ENCODE measurements at regions of chr9 and their contacts with region 1.

Region 1: DNA sequence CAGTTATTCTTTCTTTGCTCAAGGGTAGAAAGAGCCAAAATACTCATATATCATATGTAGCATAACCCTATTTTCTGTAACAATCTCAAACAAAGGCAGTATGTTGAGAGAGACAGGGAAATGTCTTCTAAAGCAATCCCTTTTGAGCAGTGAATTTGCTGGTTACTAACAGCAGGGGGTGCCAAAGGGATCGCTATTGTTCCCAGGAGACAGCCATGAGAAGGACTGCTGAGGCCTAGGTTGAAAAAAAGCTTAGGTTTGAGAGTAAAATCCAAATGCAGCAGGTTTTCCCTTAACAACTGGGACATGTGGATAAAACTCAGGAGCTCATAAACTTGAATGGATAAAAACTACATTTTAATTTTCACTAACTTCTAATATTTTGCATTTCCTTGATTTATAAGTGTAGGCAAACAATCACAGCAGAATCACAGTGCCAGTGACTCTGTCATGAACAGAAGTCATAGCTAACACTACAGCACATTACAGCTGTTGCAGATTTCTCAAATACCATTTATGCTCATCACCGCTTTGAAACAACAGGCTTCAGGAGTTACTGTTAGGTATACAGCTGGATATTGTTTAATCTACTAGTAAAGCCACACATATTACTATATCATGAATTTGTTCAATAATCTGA is 148.4 kb downstream of the MAPKAP1 start:
- DNase-seq: peak; percentile 66
- ATAC-seq: peak; percentile 82
- H3K4me3 ChIP-seq: no peak overlapping the region
- H3K27ac ChIP-seq: no peak overlapping the region
- H3K4me1 ChIP-seq: peaks cover 6% of the 10 kb centered on the region; the same call in 1 of the 2 replicates
- H3K27me3 ChIP-seq: no peaks in the 10 kb centered on the region
- CTCF ChIP-seq: peak; percentile 84
- EP300 ChIP-seq: no peak
- POLR2A ChIP-seq: no peak
- RAD21 ChIP-seq: peak; percentile 76

Region 2: GRCh38 chr9:125433461-125434011 is 125.0 kb before region 1 on chr9:
- CTCF ChIA-PET with region 1: no interaction called
- POLR2A ChIA-PET with region 1: no interaction called
- in situ Hi-C with region 1: no loop called
- intact Hi-C with region 1: loop called (anchors 5 kb)
- DNase-seq: no peak
- ATAC-seq: no peak
- H3K4me3 ChIP-seq: no peak overlapping the region
- H3K27ac ChIP-seq: no peak overlapping the region
- H3K4me1 ChIP-seq: peaks cover 18% of the 10 kb centered on the region
- H3K27me3 ChIP-seq: peaks cover 0 to 8% of the 10 kb centered on the region in 2 experiments; a peak in 1 of 5 replicates
- CTCF ChIP-seq: no peak
- EP300 ChIP-seq: no peak
- POLR2A ChIP-seq: no peak
- RAD21 ChIP-seq: no peak

Region 3: DNA sequence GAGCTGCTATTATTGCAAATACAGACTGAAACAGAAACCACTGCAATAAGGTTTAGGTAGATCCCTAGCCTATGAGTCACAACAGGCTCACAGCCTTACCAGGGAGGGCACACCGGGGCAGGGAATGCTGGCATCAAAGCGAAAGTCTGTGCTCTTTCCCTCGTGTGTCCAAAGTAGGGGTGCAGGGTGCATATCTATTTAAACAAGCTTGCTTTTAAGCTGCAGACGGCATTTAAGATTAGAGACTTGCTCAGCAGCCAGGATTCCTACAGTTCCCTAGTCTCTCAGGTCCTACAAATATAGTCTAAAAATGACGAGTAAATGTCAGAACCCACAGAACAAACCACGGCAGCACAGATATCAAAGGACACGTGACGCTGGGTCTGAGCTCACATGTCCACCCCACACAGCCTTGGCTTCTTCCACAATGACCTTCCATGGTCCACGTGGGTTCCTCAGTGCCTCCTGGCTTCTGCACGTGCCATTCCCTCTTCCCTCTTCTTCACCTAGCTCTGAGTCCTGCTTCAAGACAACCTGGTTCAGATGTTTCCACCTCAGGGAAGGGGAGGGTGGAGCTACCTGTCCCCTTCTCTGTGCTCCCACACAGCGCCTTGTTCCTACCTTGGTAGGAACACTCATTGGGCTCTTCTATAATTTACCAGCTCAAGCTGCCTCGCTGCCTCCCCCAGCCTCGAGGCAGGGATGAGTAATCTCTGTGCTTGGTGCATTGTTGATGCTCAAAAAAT is 44.7 kb before region 1 on chr9:
- CTCF ChIA-PET with region 1: no interaction called
- POLR2A ChIA-PET with region 1: no interaction called
- in situ Hi-C with region 1: no loop called
- intact Hi-C with region 1: no loop called
- DNase-seq: peak; percentile 68
- ATAC-seq: peak; percentile 95
- H3K4me3 ChIP-seq: peak overlapping the region in 2 of 3 experiments; percentile 23 to 28; a peak in 2 of 6 replicates
- H3K27ac ChIP-seq: peak overlapping the region; percentile 50
- H3K4me1 ChIP-seq: peaks cover 19% of the 10 kb centered on the region
- H3K27me3 ChIP-seq: no peaks in the 10 kb centered on the region
- CTCF ChIP-seq: no peak
- EP300 ChIP-seq: no peak
- POLR2A ChIP-seq: no peak
- RAD21 ChIP-seq: no peak

Measured in HepG2 (cell line).